ENCODE measurements at regions of chr20 and their contacts with region 1.

Region 1: GRCh38 chr20:34522969-34523871 is 7.0 kb downstream of the DYNLRB1 start:
- DNase-seq: peak; percentile 26 to 73 (median 44)
- ATAC-seq: peak; percentile 95
- H3K4me3 ChIP-seq: no peak overlapping the region
- H3K4me3 Mint-ChIP-seq: no peak overlapping the region
- H3K27ac ChIP-seq: no peak overlapping the region
- H3K27ac Mint-ChIP-seq: peak overlapping the region; percentile 12
- H3K4me1 ChIP-seq: peaks cover 22% of the 10 kb centered on the region
- H3K4me1 Mint-ChIP-seq: peaks cover 59% of the 10 kb centered on the region
- H3K27me3 ChIP-seq: no peaks in the 10 kb centered on the region
- H3K27me3 Mint-ChIP-seq: no peaks in the 10 kb centered on the region
- CTCF ChIP-seq: peak; percentile 52

Region 2: GRCh38 chr20:34458631-34459030 is 64.6 kb before region 1 on chr20:
- CTCF ChIA-PET with region 1: no interaction called
- POLR2A ChIA-PET with region 1: no interaction called
- intact Hi-C with region 1: loop called in 1 of 2 experiments (anchors 5 kb)
- DNase-seq: no peak
- ATAC-seq: no peak
- H3K4me3 ChIP-seq: no peak overlapping the region
- H3K4me3 Mint-ChIP-seq: no peak overlapping the region
- H3K27ac ChIP-seq: no peak overlapping the region
- H3K27ac Mint-ChIP-seq: no peak overlapping the region
- H3K4me1 ChIP-seq: no peaks in the 10 kb centered on the region
- H3K4me1 Mint-ChIP-seq: no peaks in the 10 kb centered on the region
- H3K27me3 ChIP-seq: no peaks in the 10 kb centered on the region
- H3K27me3 Mint-ChIP-seq: no peaks in the 10 kb centered on the region
- CTCF ChIP-seq: no peak

Region 3: GRCh38 chr20:34506480-34506879 is 16.7 kb before region 1 on chr20:
- CTCF ChIA-PET with region 1: no interaction called
- POLR2A ChIA-PET with region 1: no interaction called
- intact Hi-C with region 1: no loop called
- DNase-seq: no peak
- ATAC-seq: no peak
- H3K4me3 ChIP-seq: no peak overlapping the region
- H3K4me3 Mint-ChIP-seq: no peak overlapping the region
- H3K27ac ChIP-seq: no peak overlapping the region
- H3K27ac Mint-ChIP-seq: no peak overlapping the region
- H3K4me1 ChIP-seq: no peaks in the 10 kb centered on the region
- H3K4me1 Mint-ChIP-seq: no peaks in the 10 kb centered on the region
- H3K27me3 ChIP-seq: no peaks in the 10 kb centered on the region
- H3K27me3 Mint-ChIP-seq: no peaks in the 10 kb centered on the region
- CTCF ChIP-seq: no peak

Measured in CD4-positive, alpha-beta T cell (primary cell).